SK-N-SH (cell line): ENCODE measurements at regions of chr3 and their contacts with region 1.

Region 1: DNA sequence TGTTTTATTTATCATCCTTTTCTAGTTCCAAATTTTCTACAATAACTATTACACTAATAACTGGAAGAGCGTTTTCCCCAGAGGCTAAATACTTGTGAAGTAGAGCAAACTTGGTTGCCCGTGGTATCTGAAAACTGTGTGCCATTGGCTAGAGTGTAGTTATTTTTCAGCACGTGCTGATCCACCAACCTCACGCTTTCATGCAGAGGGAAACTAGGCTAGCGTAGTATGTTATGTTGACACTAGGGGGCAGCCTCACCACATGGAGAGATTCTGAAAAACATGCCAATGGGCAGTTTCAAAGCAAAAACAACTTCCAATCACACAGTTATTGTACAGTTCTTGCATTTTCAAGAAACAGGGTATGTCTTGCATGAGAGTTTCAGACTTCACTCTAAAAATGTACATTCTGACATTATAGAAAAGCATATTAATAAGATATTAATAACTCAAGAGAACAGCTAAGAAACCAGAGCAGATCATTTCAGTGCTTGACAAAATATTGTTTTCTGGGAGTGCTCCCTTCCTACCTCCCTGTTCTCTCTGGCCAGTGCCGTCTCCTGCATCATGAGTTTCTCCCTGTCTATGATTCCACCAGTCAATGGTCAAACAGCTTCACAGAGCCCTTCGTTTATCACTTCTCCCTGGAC is 39.7 kb downstream of the SPATA12 start:
- DNase-seq: peak; percentile 75
- H3K4me3 ChIP-seq: peak overlapping the region in 1 of 2 experiments; percentile 7; a peak in 1 of 4 replicates
- H3K27ac ChIP-seq: peak overlapping the region in 1 of 2 experiments; percentile 78; a peak in 2 of 4 replicates
- H3K4me1 ChIP-seq: peaks cover 0 to 7% of the 10 kb centered on the region in 2 experiments; a peak in 2 of 4 replicates
- H3K27me3 ChIP-seq: no peaks in the 10 kb centered on the region
- CTCF ChIP-seq: peak; percentile 90
- EP300 ChIP-seq: no peak
- RAD21 ChIP-seq: peak; percentile 97

Region 2: DNA sequence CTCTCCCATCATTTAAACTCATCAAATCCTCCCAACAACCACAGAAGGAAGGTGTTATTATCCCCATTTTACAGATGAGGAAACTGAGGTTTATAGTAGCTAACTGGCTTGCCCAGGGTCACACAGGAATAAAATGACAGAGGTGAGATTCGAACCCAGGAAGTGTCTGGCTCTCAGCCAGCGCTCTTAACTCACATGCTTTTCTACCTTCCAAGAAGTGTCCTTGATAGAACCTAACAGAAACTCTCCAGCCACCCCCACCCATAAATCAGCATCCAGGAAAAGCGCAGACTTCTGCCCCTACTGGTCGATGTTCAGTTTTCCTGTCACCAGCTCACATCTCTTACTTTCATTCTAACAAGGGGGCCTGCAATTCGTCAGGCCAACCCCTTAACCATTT is 12.0 kb after region 1 on chr3:
- CTCF ChIA-PET with region 1: interaction called, 12 read pairs
- POLR2A ChIA-PET with region 1: no interaction called
- DNase-seq: peak; percentile 72
- H3K4me3 ChIP-seq: no peak overlapping the region
- H3K27ac ChIP-seq: no peak overlapping the region
- H3K4me1 ChIP-seq: peaks cover 0 to 10% of the 10 kb centered on the region in 2 experiments; a peak in 1 of 4 replicates
- H3K27me3 ChIP-seq: no peaks in the 10 kb centered on the region
- CTCF ChIP-seq: peak; percentile 55
- EP300 ChIP-seq: 0 out of 4 replicates have a peak, but pooled peaks of 1 of the 2 experiments have one; percentile 14
- RAD21 ChIP-seq: peak; percentile 33

Region 3: GRCh38 chr3:57130571-57131209 is 30.5 kb after region 1 on chr3:
- CTCF ChIA-PET with region 1: interaction called, 14 read pairs
- POLR2A ChIA-PET with region 1: no interaction called
- DNase-seq: peak; percentile 81
- H3K4me3 ChIP-seq: no peak overlapping the region; a peak in 1 of 4 replicates
- H3K27ac ChIP-seq: peak overlapping the region in 1 of 2 experiments; percentile 100; a peak in 2 of 4 replicates
- H3K4me1 ChIP-seq: peaks cover 8 to 75% of the 10 kb centered on the region in 2 experiments; a peak in 3 of 4 replicates
- H3K27me3 ChIP-seq: no peaks in the 10 kb centered on the region
- CTCF ChIP-seq: no peak
- EP300 ChIP-seq: peak; percentile 9 to 98; a peak in 2 of 4 replicates
- RAD21 ChIP-seq: peak; percentile 30; the same call in 1 of the 2 replicates

Region 4: GRCh38 chr3:57169872-57170623 is 69.9 kb after region 1 on chr3:
- CTCF ChIA-PET with region 1: interaction called, 52 read pairs
- POLR2A ChIA-PET with region 1: no interaction called
- DNase-seq: peak; percentile 84
- H3K4me3 ChIP-seq: peak overlapping the region; percentile 30 to 34
- H3K27ac ChIP-seq: no peak overlapping the region
- H3K4me1 ChIP-seq: peaks cover 0 to 15% of the 10 kb centered on the region in 2 experiments; a peak in 1 of 4 replicates
- H3K27me3 ChIP-seq: peaks cover 15% of the 10 kb centered on the region; the same call in 1 of the 2 replicates
- CTCF ChIP-seq: peak; percentile 79
- EP300 ChIP-seq: no peak
- RAD21 ChIP-seq: peak; percentile 81

Region 5: GRCh38 chr3:57227204-57227929 is 127.2 kb after region 1 on chr3 and contains the start of gene APPL1:
- CTCF ChIA-PET with region 1: interaction called, 16 read pairs
- POLR2A ChIA-PET with region 1: no interaction called
- DNase-seq: peak; percentile 100
- H3K4me3 ChIP-seq: peak within 1 kb of the TSS; percentile 82 to 83
- H3K27ac ChIP-seq: peak within 1 kb of the TSS; percentile 74 to 92
- H3K4me1 ChIP-seq: peaks cover 0 to 12% of the 10 kb centered on the region in 2 experiments; a peak in 2 of 4 replicates
- H3K27me3 ChIP-seq: no peaks in the 10 kb centered on the region
- CTCF ChIP-seq: no peak
- EP300 ChIP-seq: no peak
- RAD21 ChIP-seq: no peak
- polyA plus RNA-seq, gene APPL1: 6.9 and 9.9 TPM in 2 replicates

Region 6: DNA sequence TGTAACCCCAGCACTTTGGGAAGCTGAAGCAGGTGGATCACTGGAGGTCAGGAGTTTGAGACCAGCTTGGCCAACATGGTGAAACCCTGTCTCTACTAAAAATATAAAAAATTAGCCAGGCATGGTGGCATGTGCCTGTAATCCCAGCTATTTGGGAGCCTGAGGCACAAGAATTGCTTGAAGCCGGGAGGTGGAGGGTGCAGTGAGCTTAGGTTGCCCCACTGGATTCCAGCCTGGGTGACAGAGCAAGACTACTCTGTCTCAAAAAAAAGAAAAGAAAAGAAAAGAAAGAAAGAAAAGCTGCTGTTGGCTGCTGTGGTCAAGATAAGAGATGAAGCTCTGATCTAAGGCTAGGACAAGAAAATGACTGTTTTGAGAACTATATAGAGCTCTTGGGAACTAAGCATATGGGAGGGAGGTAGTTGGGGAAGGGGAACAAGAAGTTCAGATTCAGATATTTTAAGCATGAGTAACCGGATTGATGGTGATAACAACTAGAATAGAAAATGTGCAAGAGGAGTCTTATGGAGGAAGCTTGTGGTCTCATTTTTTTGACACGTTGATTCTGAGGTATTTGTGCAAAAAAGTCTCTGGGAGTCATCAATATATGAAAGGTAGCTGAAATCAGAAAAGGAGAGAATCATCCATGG is 418.2 kb after region 1 on chr3:
- CTCF ChIA-PET with region 1: no interaction called
- POLR2A ChIA-PET with region 1: no interaction called
- DNase-seq: no peak
- H3K4me3 ChIP-seq: no peak overlapping the region
- H3K27ac ChIP-seq: peak overlapping the region in 1 of 2 experiments; percentile 28; a peak in 1 of 4 replicates
- H3K4me1 ChIP-seq: peaks cover 0 to 6% of the 10 kb centered on the region in 2 experiments; a peak in 1 of 4 replicates
- H3K27me3 ChIP-seq: no peaks in the 10 kb centered on the region
- CTCF ChIP-seq: no peak
- EP300 ChIP-seq: no peak
- RAD21 ChIP-seq: no peak